H1 (cell line): ENCODE measurements at regions of chr7 and their contacts with region 1.

Region 1: GRCh38 chr7:150876817-150877526 is 24.7 kb downstream of the AOC1 start:
- DNase-seq: peak; percentile 62 to 79
- H3K4me3 ChIP-seq: peak overlapping the region; percentile 6 to 52 (median 29); a peak in 6 of 8 replicates
- H3K27ac ChIP-seq: peak overlapping the region; percentile 91; the same call in 1 of the 2 replicates
- H3K4me1 ChIP-seq: 0 out of 7 replicates have a peak, but pooled peaks cover 0 to 7% (median 0%) of the 10 kb centered on the region in 4 experiments
- H3K27me3 ChIP-seq: no peaks in the 10 kb centered on the region; a peak in 1 of 7 replicates
- CTCF ChIP-seq: peak; percentile 66 to 78 (median 72)
- EP300 ChIP-seq: 0 out of 3 replicates have a peak, but pooled peaks of 1 of the 2 experiments have one; percentile 46
- POLR2A ChIP-seq: peak; percentile 50 to 81
- RAD21 ChIP-seq: peak; percentile 58 to 59

Region 2: DNA sequence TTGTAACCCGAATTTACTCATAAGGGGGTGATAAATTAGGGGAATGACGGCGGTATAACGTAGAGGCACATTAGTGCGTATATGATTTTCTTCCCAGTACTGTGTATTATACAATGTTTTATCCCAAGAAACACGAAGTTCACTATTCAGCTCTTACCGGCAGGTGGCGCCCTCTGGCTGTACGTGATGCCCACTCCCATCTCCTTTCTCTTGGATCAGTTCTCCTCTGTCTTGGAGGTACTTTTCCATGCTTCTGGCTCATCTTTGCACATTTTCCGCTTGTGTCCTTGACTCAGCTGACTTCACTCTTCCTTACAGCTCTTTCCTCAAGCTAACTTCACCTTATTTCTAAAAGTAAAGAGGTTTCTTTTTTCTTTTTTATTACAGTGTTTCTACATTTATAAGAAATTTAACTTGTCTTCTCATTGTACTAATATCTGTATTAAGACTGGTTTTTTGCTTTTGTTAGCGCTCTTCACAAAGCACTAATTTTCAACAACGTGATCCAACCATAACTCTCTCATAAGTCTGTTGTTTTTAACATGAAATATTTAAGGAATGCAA is 98.2 kb before region 1 on chr7:
- CTCF ChIA-PET with region 1: interaction called, 50 read pairs
- POLR2A ChIA-PET with region 1: no interaction called
- DNase-seq: peak; percentile 41 to 93
- H3K4me3 ChIP-seq: no peak overlapping the region
- H3K27ac ChIP-seq: no peak overlapping the region
- H3K4me1 ChIP-seq: no peaks in the 10 kb centered on the region
- H3K27me3 ChIP-seq: no peaks in the 10 kb centered on the region; a peak in 1 of 7 replicates
- CTCF ChIP-seq: peak; percentile 85 to 88 (median 88)
- EP300 ChIP-seq: no peak
- POLR2A ChIP-seq: no peak
- RAD21 ChIP-seq: peak; percentile 86 to 91

Region 3: DNA sequence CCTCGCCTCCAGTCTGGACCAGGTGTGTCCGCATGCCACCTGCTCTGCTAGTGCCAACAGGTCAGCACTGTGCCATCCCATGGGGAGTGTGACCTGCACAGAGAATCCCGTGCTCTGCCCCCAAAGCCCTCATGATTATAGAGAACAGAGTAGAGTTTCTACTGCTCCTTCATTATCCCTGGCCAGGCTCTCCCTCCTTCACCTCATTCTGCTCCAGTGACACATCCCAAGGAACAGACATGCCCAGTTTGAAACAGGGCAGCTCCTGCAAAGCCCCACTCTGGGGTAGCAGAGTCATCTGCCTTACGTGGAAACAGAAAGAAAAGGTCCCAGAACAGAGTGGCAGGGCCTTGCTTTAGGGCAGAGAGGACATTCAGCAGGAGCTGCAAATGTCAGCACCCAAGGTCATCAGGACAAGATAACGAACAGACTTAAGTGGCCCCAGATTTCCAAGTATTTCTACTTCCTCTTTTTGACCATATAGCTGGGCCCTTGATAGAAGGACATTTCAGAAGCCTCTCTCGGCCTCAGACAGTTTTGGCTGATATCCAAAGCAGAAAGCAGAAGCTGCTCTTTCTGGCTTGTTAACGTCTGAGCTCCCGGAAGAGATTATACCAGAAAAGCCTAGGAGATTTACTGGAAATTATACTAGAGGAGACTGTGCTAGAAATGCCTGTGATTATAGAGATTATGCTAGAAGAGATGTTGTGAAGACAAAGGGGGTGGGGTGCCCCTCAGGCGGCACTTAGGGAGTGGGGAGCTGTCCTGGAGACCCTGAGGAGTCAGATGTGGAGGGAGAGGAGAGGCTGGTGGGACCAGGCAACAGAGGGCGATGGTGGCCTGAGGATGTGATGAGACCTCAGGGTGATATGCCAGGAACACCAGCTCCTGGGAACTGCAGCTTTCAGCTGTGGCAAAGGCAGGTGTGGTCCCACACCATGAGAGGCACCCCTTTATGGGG is 89.4 kb before region 1 on chr7:
- CTCF ChIA-PET with region 1: interaction called, 12 read pairs
- POLR2A ChIA-PET with region 1: no interaction called
- DNase-seq: no peak
- H3K4me3 ChIP-seq: no peak overlapping the region
- H3K27ac ChIP-seq: no peak overlapping the region
- H3K4me1 ChIP-seq: no peaks in the 10 kb centered on the region; a peak in 1 of 7 replicates
- H3K27me3 ChIP-seq: no peaks in the 10 kb centered on the region; a peak in 1 of 7 replicates
- CTCF ChIP-seq: peak; percentile 38 to 65 (median 45); a peak in 3 of 4 replicates
- EP300 ChIP-seq: no peak
- POLR2A ChIP-seq: no peak
- RAD21 ChIP-seq: peak; percentile 61 to 64

Region 4: GRCh38 chr7:150974468-150975391 is 97.8 kb after region 1 on chr7:
- CTCF ChIA-PET with region 1: interaction called, 13 read pairs
- POLR2A ChIA-PET with region 1: no interaction called
- DNase-seq: peak in 1 of 2 experiments; percentile 72
- H3K4me3 ChIP-seq: peak overlapping the region; percentile 33 to 93 (median 58)
- H3K27ac ChIP-seq: no peak overlapping the region
- H3K4me1 ChIP-seq: peaks cover 5 to 39% (median 31%) of the 10 kb centered on the region in 4 experiments
- H3K27me3 ChIP-seq: peaks cover 2 to 24% (median 22%) of the 10 kb centered on the region in 4 experiments
- CTCF ChIP-seq: peak in 1 of 3 experiments; percentile 23; a peak in 2 of 4 replicates
- EP300 ChIP-seq: no peak
- POLR2A ChIP-seq: no peak
- RAD21 ChIP-seq: no peak